Heart left ventricle (tissue), 16 donors: ENCODE measurements at regions of chr1 and their contacts with region 1.

Region 1: GRCh38 chr1:17089506-17089905 is 29.7 kb downstream of the PADI2 start:
- DNase-seq: no peak
- ATAC-seq: no peak
- H3K4me3 ChIP-seq: no peak overlapping the region
- H3K27ac ChIP-seq: no peak overlapping the region
- H3K4me1 ChIP-seq: no peaks in the 10 kb centered on the region
- H3K27me3 ChIP-seq: no peaks in the 10 kb centered on the region
- CTCF ChIP-seq: no peak
- POLR2A ChIP-seq: no peak

Region 2: GRCh38 chr1:17071794-17072193 is 17.7 kb before region 1 on chr1:
- intact Hi-C with region 1: loop called in 1 of 10 experiments (anchors 2 kb)
- DNase-seq: no peak
- ATAC-seq: no peak
- H3K4me3 ChIP-seq: no peak overlapping the region
- H3K27ac ChIP-seq: no peak overlapping the region
- H3K4me1 ChIP-seq: no peaks in the 10 kb centered on the region
- H3K27me3 ChIP-seq: no peaks in the 10 kb centered on the region
- CTCF ChIP-seq: no peak
- POLR2A ChIP-seq: no peak